ENCODE measurements at regions of chr2 and their contacts with region 1.

Region 1: GRCh38 chr2:238120463-238121298 is 17.8 kb upstream of the KLHL30 start:
- DNase-seq: no peak
- H3K4me3 ChIP-seq: no peak overlapping the region
- H3K27ac ChIP-seq: no peak overlapping the region
- H3K4me1 ChIP-seq: peaks cover 0 to 6% (median 2%) of the 10 kb centered on the region in 4 experiments; a peak in 3 of 7 replicates
- H3K27me3 ChIP-seq: no peaks in the 10 kb centered on the region; a peak in 1 of 7 replicates
- CTCF ChIP-seq: peak in 2 of 3 experiments; percentile 11 to 21; a peak in 3 of 4 replicates
- EP300 ChIP-seq: no peak
- POLR2A ChIP-seq: no peak
- RAD21 ChIP-seq: peak; percentile 24 to 50; a peak in 3 of 4 replicates

Region 2: GRCh38 chr2:238106686-238107524 is 13.8 kb before region 1 on chr2:
- CTCF ChIA-PET with region 1: interaction called, 10 read pairs
- POLR2A ChIA-PET with region 1: interaction called, 4 read pairs
- DNase-seq: peak in 1 of 2 experiments; percentile 75
- H3K4me3 ChIP-seq: no peak overlapping the region
- H3K27ac ChIP-seq: no peak overlapping the region
- H3K4me1 ChIP-seq: peaks cover 0 to 16% (median 7%) of the 10 kb centered on the region in 4 experiments; a peak in 6 of 7 replicates
- H3K27me3 ChIP-seq: no peaks in the 10 kb centered on the region; a peak in 1 of 7 replicates
- CTCF ChIP-seq: peak in 2 of 3 experiments; percentile 46 to 50; a peak in 2 of 4 replicates
- EP300 ChIP-seq: no peak
- POLR2A ChIP-seq: no peak
- RAD21 ChIP-seq: peak; percentile 66 to 67

Region 3: DNA sequence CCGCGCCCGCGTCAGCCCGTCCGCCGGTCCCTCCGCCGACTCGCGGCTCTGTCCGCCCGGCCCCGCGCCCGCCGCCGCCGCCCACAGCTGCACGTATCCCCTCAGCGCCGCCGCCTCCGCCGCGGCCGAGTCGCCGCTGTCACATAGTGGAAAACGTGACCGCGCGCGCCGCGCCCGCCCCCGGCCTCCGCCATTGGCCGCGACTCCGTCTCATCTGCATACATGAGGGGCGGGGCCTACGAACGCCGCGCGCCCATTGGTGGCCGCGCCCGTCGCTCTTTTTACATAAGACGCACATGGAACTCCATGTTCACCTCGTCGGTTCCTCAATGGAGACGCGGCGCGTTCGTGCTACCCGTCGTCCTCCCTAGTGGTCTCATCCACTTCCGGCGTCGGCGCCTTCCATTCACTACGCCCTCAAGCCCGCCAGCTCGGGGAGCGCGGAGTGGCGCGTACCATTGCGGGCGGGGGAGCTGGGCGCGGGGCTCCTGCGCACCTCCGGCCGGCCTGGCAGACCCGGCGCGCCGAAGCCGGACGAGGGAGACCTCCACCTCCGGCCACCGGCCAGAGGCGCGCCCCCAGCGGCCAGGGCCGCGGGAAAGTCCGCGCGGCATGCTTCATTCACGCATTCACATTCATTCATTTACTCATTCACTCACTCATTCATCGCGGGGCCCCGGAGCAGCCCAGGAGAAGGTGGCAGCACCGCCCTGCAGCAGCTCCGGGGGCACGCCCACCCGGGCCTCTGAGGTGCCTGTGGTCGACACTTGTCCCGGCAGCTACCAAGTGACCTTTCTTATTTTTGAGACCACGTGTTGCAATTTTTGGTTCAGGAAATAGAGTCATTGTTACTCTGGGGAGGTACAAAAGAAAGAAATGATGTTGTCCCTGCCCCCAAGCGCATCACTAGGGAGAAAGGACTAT is 168.2 kb after region 1 on chr2:
- CTCF ChIA-PET with region 1: no interaction called
- POLR2A ChIA-PET with region 1: no interaction called
- DNase-seq: peak; percentile 98
- H3K4me3 ChIP-seq: peak overlapping the region; percentile 72 to 84 (median 77)
- H3K27ac ChIP-seq: no peak overlapping the region
- H3K4me1 ChIP-seq: peaks cover 7 to 25% (median 18%) of the 10 kb centered on the region in 4 experiments
- H3K27me3 ChIP-seq: peaks cover 0 to 10% (median 2%) of the 10 kb centered on the region in 4 experiments; a peak in 2 of 7 replicates
- CTCF ChIP-seq: peak in 2 of 3 experiments; percentile 35 to 37; a peak in 2 of 4 replicates
- EP300 ChIP-seq: peak in 1 of 2 experiments; percentile 97; a peak in 2 of 3 replicates
- POLR2A ChIP-seq: no peak; a peak in 1 of 3 replicates
- RAD21 ChIP-seq: no peak

Measured in H1 (cell line).